ENCODE measurements at regions of chr12 and their contacts with region 1.

Region 1: DNA sequence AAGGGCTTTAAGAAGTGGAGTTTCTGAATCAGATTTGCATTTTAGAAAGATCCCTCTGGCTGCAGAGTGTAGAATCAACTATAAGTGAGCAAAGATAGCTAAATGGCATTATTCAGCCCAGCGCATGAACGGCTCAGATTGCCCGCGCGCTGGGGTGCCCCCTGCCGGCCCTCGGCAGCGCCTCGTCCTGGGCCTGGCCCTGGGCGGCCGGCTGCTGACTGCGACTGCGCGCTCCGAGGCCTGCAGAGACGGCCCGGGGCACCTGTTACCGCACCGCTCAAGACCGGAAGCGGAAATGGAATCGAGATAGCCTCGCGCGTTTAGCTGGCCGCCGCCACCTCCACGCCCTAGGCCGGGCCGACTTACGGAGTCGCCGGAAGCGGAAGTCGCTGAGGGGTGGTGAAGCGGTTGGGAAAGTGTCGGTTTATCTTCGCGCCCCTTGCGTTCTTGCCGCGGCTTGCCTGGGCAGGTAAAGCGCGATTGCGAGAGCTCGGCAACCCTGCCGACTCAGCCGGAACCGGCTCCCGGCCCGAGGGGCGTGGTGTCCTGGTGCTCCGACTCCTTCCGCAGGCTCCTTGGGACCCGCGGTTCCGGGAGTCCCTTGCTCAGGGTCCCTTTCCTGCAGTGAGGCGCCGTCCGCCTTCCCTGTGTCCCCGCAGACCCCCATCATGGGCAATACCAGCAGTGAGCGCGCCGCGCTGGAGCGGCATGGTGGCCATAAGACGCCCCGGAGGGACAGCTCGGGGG is at the start of gene PRKAB1:
- DNase-seq: peak; percentile 96 to 98 (median 96)
- ATAC-seq: peak; percentile 91 to 98 (median 94)
- H3K4me3 ChIP-seq: peak within 1 kb of the TSS; percentile 79 to 99 (median 91)
- H3K27ac ChIP-seq: peak within 1 kb of the TSS; percentile 85 to 94 (median 90)
- H3K4me1 ChIP-seq: peaks cover 20 to 27% (median 22%) of the 10 kb centered on the region in 3 donors
- H3K27me3 ChIP-seq: no peaks in the 10 kb centered on the region
- CTCF ChIP-seq: peak; percentile 90 to 95 (median 94)
- total RNA-seq, gene PRKAB1: 12.4 to 23.7 (median 18.6) TPM

Region 2: DNA sequence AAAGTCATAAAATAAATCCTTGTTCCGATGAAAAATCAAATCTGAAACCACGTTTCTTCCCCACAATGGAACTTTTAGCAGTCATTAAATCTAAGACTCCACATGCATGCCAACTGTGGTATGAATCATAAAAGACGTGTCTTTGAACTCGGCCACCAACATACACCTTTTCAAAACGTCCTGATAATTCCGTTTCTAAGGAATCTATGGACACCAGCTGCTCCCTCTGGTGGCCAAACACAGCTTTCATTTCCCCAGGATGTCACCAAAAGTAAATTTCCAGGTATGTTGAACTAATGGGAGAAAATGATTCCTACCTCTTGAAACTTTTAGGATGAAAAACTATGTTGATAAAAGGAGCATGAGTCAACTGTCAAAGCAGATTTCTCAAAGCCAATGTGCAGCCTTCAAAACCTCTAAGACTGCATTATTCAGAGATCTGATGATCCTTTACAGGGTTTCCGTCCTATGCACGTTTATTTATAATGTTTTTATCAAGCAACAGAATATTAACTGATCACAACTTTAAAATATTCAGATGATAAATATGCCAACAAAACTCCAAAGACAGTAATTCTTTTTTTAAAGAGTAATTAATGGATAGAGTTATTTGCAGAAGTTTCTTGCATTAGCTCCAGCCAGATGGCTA is 113.2 kb after region 1 on chr12:
- intact Hi-C with region 1: loop called in 1 of 3 experiments (anchors 10 kb)
- DNase-seq: peak in 5 of 6 donors; percentile 16 to 66 (median 52)
- ATAC-seq: peak; percentile 67 to 85 (median 78)
- H3K4me3 ChIP-seq: no peak overlapping the region
- H3K27ac ChIP-seq: no peak overlapping the region
- H3K4me1 ChIP-seq: no peaks in the 10 kb centered on the region
- H3K27me3 ChIP-seq: no peaks in the 10 kb centered on the region
- CTCF ChIP-seq: peak; percentile 60 to 71 (median 69)

Measured in pancreas (tissue), 10 donors.